Kidney (tissue), 22 donors: ENCODE measurements at regions of chr14 and their contacts with region 1.

Region 1: GRCh38 chr14:69242311-69243224 is 17.4 kb upstream of the GALNT16 start:
- DNase-seq: peak in 4 of 5 donors; percentile 66 to 84 (median 74)
- H3K4me3 ChIP-seq: no peak overlapping the region
- H3K27ac ChIP-seq: no peak overlapping the region
- H3K4me1 ChIP-seq: no peaks in the 10 kb centered on the region
- H3K27me3 ChIP-seq: no peaks in the 10 kb centered on the region
- CTCF ChIP-seq: peak; percentile 69

Region 2: GRCh38 chr14:69288011-69288771 is 45.6 kb after region 1 on chr14:
- intact Hi-C with region 1: no loop called
- DNase-seq: peak in 3 of 5 donors; percentile 48 to 79 (median 77)
- H3K4me3 ChIP-seq: no peak overlapping the region
- H3K27ac ChIP-seq: peak overlapping the region; percentile 3 to 23
- H3K4me1 ChIP-seq: peaks cover 0 to 14% (median 5%) of the 10 kb centered on the region in 3 donors
- H3K27me3 ChIP-seq: no peaks in the 10 kb centered on the region
- CTCF ChIP-seq: no peak

Region 3: DNA sequence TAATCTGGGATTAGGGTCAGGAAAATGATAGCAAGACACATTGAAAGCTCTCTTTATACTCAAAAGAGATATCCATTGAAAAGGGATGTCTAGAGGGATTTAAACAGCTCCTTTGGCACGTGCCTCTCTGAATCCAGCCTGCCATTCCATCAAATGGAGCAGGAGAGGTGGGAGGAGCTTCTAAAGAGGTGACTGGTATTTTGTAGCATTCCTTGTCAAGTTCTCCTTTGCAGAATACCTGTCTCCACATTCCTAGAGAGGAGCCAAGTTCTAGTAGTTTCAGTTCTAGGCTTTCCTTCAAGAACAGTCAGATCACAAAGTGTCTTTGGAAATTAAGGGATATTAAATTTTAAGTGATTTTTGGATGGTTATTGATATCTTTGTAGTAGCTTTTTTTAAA is 216.6 kb after region 1 on chr14:
- intact Hi-C with region 1: loop called (anchors 10 kb)
- DNase-seq: no peak
- H3K4me3 ChIP-seq: no peak overlapping the region
- H3K27ac ChIP-seq: no peak overlapping the region
- H3K4me1 ChIP-seq: no peaks in the 10 kb centered on the region
- H3K27me3 ChIP-seq: no peaks in the 10 kb centered on the region
- CTCF ChIP-seq: no peak